Aorta (tissue), 5 donors: ENCODE measurements at regions of chr17 and their contacts with region 1.

Region 1: DNA sequence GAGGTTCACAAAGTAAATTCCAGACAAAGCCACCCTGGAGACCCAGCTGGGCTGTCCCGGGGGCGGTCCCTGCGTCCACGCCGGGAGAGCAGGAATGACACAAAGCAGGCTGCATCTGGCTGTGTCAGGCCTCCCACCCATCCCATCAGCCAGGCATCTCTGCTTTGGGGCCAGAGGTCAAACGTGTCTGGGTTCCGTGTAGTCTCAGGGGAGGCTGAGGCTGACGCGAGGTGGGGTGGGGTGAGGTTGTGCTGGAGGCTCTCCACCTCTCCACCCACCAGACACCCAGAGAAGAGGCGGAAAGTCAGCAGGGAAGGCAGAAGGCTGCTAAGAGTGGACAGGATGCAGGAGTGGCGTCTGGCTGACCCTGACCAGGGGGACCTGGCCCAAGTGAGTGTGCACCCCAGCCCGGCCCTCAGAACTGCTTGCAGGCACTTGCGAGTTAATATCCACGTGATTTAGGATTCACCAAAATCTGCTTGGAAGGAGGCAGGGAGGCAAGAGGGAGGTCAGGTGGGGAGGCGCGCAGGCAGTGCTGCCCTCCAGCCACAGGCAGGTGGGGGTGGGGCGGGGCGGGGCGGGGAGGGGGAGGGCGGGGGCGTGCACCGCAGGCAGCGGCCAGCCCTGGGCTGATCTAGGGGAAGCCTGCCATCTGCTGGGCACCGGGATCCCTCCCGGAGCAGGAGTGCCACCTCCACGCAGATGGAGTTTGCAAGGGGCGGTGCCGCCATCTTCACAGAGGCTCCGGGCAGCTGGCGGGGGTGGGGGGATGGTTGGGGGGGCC is 44.3 kb downstream of the TBC1D16 start:
- DNase-seq: peak; percentile 86 to 93
- ATAC-seq: peak; percentile 74
- H3K4me3 ChIP-seq: no peak overlapping the region
- H3K27ac ChIP-seq: no peak overlapping the region
- H3K4me1 ChIP-seq: no peaks in the 10 kb centered on the region
- H3K27me3 ChIP-seq: no peaks in the 10 kb centered on the region

Region 2: DNA sequence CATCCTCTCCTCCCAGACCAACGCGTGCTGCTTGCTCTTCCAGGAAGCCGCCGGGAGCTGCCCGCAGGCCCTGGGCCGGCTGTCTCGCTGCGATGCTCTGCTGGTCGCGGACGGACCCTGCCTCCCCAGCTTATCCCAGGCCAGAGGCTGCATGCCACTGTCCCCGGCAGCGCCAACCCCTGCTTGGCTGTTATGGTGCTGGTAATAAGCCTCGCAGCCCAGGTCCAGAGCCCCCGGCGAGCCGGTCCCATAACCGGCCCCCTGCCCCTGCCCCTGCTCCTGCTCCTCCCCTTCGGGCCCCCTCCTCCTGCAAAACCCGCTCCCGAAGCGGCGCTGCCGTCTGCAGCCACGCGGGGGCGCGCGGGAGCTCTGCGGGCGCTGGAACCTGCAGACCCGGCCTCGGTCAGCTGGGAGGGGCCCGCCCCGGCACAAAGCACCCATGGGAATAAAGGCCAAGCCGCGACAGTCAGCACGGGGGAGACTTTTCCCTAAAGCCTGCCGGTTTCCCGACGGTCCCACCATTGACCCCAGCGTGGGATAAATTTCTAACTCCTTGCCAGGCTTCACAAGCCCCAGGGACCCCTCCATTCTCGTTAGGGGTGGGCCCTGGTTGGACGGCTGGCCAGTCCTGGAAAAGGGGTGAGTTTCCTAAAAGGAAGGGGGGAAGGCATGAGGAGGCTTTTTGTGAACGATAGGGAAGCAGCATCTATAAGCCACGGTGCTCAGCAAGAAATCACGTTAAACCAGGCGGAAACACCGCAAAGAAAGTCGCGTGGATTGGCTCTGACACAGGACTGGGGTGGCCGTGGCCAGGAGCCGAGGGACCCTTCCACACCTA is 249.4 kb before region 1 on chr17:
- intact Hi-C with region 1: loop called (anchors 2 kb)
- DNase-seq: peak; percentile 78 to 91
- ATAC-seq: peak; percentile 81
- H3K4me3 ChIP-seq: no peak overlapping the region
- H3K27ac ChIP-seq: no peak overlapping the region
- H3K4me1 ChIP-seq: no peaks in the 10 kb centered on the region
- H3K27me3 ChIP-seq: no peaks in the 10 kb centered on the region

Region 3: GRCh38 chr17:79789534-79790353 is 201.6 kb before region 1 on chr17:
- intact Hi-C with region 1: loop called (anchors 2 to 5 kb)
- DNase-seq: peak; percentile 65 to 87
- ATAC-seq: peak; percentile 72
- H3K4me3 ChIP-seq: no peak overlapping the region
- H3K27ac ChIP-seq: no peak overlapping the region
- H3K4me1 ChIP-seq: no peaks in the 10 kb centered on the region
- H3K27me3 ChIP-seq: no peaks in the 10 kb centered on the region

Region 4: GRCh38 chr17:79951361-79952264 is 39.7 kb before region 1 on chr17:
- intact Hi-C with region 1: no loop called
- DNase-seq: peak; percentile 71 to 82
- ATAC-seq: peak; percentile 65
- H3K4me3 ChIP-seq: no peak overlapping the region
- H3K27ac ChIP-seq: no peak overlapping the region
- H3K4me1 ChIP-seq: no peaks in the 10 kb centered on the region
- H3K27me3 ChIP-seq: no peaks in the 10 kb centered on the region